ENCODE measurements at regions of chr1 and their contacts with region 1.

Region 1: GRCh38 chr1:224922404-224923164 is 6.9 kb upstream of the DNAH14 start:
- DNase-seq: peak; percentile 6
- H3K4me3 Mint-ChIP-seq: no peak overlapping the region
- H3K27ac Mint-ChIP-seq: no peak overlapping the region
- H3K4me1 Mint-ChIP-seq: no peaks in the 10 kb centered on the region
- H3K27me3 Mint-ChIP-seq: peaks cover 14% of the 10 kb centered on the region

Region 2: DNA sequence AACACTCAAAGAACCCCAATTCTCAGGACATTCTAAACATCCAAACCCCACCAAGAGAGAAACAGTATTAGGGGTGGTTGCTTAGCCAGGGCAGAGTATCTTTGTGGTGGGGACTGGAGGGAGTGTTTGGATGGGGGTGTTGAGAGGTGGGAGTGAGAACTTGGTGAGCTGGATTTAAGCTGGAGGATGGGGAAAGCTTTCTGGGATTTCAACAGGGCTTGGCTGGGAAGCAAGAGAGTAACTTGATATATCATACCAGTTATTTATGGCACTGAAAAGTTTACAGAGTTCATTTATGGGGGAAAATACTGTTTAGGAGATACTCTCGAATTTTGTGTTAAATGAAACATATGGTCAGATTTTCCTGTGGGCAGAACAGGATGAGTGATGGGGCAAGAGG is 313.3 kb before region 1 on chr1:
- CTCF ChIA-PET with region 1: no interaction called
- intact Hi-C with region 1: no loop called
- DNase-seq: no peak
- H3K4me3 Mint-ChIP-seq: no peak overlapping the region
- H3K27ac Mint-ChIP-seq: no peak overlapping the region
- H3K4me1 Mint-ChIP-seq: no peaks in the 10 kb centered on the region
- H3K27me3 Mint-ChIP-seq: peaks cover 2% of the 10 kb centered on the region

Region 3: DNA sequence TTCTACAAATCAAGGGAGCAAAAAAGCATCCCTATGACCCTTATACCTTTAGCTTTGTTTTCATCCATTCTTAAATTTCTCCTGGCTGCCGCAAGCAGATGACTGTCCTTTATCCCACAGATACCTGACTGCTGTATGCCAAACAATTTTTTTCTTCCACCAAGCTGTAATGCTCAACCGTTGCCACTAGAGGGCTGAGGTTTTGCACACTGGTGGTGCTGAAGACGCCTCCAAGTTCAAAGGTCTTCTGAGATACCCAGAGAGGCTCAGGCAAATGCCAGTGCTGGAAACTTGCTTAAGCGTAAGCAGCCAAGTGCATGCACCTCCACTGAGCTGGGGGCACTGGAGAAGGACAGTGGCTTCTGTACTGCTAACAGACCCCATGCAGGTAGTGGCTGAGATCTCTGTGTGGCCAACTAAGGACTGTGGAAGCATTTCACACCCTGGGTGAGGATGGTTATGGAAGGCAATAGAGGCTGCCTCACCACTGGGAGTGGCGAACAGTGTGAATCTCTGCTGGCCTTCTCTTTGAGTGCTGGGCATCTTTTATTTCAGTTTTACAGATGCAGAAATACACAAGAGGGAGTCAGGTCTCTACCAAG is 277.9 kb before region 1 on chr1:
- CTCF ChIA-PET with region 1: interaction called, 11 read pairs
- intact Hi-C with region 1: loop called (anchors 1 kb)
- DNase-seq: peak; percentile 72
- H3K4me3 Mint-ChIP-seq: no peak overlapping the region
- H3K27ac Mint-ChIP-seq: no peak overlapping the region
- H3K4me1 Mint-ChIP-seq: no peaks in the 10 kb centered on the region
- H3K27me3 Mint-ChIP-seq: no peaks in the 10 kb centered on the region